CD8-positive, alpha-beta T cell (primary cell): ENCODE measurements at regions of chr4 and their contacts with region 1.

Region 1: DNA sequence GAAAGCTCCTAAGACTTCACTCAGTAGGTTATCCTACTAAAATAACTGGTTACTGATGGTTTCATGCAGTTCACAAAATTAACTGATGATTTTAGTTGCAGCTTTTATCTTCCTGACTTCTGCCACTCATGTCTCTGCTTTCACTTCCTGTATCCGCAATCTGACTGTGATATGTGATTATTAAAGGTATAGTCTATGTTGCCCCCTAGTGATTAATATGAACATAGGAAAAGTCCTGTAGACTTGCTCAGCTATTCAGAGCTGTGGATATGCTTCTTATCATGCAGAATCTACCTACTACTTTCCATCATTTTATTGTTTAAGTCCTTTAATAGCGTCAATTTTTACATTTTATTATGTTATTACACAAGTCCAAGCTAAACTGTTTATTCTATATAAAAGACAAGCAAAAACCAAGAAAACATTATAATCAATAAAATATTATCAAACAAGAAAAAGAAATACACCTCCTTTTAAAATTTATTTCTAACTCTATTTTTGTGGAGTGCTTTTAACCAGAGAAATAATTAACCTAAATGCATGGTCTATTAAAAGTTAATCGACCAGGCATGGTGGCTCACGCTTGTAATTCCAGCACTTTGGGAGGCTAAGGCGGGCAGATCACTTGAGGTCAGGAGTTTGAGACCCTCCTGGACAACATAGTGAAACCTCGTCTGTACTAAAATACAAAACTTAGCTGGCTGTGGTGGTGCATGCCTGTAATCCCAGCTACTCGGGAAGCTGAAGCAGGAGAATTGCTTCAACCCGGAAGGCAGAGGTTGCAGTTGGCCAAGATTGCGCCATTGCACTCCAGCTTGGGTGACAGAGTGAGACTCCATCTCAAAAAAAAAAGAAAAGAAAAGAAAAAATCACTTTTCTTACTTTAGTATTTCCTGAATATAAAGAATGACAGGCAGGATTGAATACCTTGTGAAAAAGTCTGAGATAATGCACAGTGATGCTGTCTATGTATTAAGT is 40.4 kb upstream of the TLR2 start:
- DNase-seq: peak in 2 of 9 experiments; percentile 63 to 75
- ATAC-seq: peak; percentile 99
- H3K4me3 ChIP-seq: no peak overlapping the region
- H3K4me3 Mint-ChIP-seq: no peak overlapping the region
- H3K27ac ChIP-seq: no peak overlapping the region
- H3K27ac Mint-ChIP-seq: peak overlapping the region; percentile 49
- H3K4me1 ChIP-seq: no peaks in the 10 kb centered on the region
- H3K4me1 Mint-ChIP-seq: peaks cover 3% of the 10 kb centered on the region
- H3K27me3 ChIP-seq: no peaks in the 10 kb centered on the region
- H3K27me3 Mint-ChIP-seq: no peaks in the 10 kb centered on the region
- CTCF ChIP-seq: peak; percentile 62

Region 2: GRCh38 chr4:153221783-153222706 is 421.6 kb before region 1 on chr4:
- CTCF ChIA-PET with region 1: no interaction called
- POLR2A ChIA-PET with region 1: no interaction called
- intact Hi-C with region 1: loop called in 1 of 2 experiments (anchors 10 kb)
- DNase-seq: peak in 7 of 9 experiments; percentile 7 to 52 (median 27)
- ATAC-seq: peak; percentile 66
- H3K4me3 ChIP-seq: peak overlapping the region; percentile 53 to 68
- H3K4me3 Mint-ChIP-seq: peak overlapping the region; percentile 88
- H3K27ac ChIP-seq: no peak overlapping the region
- H3K27ac Mint-ChIP-seq: peak overlapping the region; percentile 20
- H3K4me1 ChIP-seq: peaks cover 17% of the 10 kb centered on the region
- H3K4me1 Mint-ChIP-seq: peaks cover 29% of the 10 kb centered on the region
- H3K27me3 ChIP-seq: peaks cover 0 to 2% of the 10 kb centered on the region in 2 experiments
- H3K27me3 Mint-ChIP-seq: peaks cover 7% of the 10 kb centered on the region
- CTCF ChIP-seq: no peak